Tibial artery (tissue), 4 donors: ENCODE measurements at regions of chr7 and their contacts with region 1.

Region 1: DNA sequence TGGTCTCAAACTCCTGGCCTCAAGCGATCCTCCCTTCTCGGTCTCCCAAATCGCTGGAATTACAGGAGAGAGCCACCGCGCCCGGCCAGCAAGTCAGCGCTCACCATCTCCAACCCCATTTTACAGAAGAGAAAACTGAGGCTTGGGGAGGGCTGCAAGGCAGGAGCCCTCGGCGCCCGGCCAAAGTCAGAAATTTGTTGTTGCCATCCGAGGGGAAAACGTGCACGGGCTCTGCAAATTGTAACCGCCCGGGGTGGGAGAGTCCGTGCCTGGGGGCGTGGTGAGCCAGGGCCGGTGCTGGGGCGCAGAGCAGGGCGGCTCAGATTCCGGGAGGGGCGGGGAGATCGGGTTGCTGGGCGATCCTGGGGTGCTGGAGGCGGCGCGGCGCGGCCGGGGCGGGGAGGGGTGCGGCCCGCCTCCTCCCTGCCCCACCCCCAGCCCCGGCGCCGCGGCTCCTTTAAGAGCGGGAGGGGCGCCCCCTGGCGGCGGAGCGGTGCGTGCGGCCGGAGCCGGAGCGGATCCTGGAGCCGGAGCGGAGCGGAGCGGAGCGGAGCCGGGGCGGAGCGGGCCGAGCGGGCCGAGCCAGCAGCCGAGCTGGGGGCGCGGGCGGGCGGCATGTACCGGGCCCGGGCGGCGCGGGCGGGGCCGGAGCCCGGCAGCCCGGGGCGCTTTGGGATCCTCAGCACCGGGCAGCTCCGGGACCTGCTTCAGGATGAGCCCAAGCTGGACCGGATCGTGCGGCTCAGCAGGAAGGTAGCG is at the start of gene VPS37D:
- DNase-seq: peak; percentile 82 to 90
- H3K4me3 ChIP-seq: peak within 1 kb of the TSS; percentile 53 to 54
- H3K27ac ChIP-seq: no peak within 1 kb of the TSS
- H3K4me1 ChIP-seq: peaks cover 0 to 19% (median 13%) of the 10 kb centered on the region in 4 donors
- H3K27me3 ChIP-seq: peaks cover 0 to 22% of the 10 kb centered on the region in 2 donors
- CTCF ChIP-seq: peak; percentile 65 to 97

Region 2: DNA sequence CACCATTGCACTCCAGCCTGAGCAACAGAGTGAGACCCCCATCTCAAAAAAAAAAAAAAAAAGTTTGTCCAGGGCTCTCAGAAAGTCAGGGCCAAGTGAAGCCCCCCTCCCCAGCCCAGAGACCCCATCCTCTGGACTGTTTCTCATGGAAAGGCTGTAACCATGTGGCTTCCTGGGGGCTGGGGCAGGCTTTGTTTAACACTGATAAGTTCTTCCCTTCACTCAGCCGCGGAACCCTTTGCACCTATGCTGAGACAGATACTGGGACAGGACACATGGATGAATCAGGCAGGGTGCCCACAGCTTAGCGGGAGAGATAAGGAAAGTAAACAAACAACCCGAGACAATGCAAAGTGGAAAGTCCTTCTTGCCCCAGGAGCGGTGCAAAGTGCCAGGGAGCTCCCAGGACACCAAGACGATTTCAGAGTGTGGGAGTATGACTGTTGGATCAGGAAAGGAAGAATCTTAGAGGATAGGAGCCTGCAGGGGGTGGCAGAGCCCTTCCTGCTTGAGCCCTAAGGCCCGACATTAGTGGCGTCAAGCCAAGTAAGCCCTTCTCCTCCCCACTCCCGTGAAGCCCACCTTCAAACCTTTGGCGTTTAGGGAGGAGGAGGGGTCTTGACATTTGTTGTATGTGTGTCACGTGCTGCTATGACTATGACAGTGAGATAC is 54.8 kb before region 1 on chr7:
- intact Hi-C with region 1: loop called (anchors 5 kb)
- DNase-seq: no peak
- H3K4me3 ChIP-seq: no peak overlapping the region
- H3K27ac ChIP-seq: no peak overlapping the region
- H3K4me1 ChIP-seq: no peaks in the 10 kb centered on the region
- H3K27me3 ChIP-seq: peaks cover 0 to 51% of the 10 kb centered on the region in 2 donors
- CTCF ChIP-seq: no peak

Region 3: GRCh38 chr7:73738612-73739374 is 71.3 kb after region 1 on chr7 and contains the start of gene ABHD11:
- intact Hi-C with region 1: loop called (anchors 5 kb)
- DNase-seq: peak; percentile 96 to 99
- H3K4me3 ChIP-seq: peak within 1 kb of the TSS; percentile 74 to 93
- H3K27ac ChIP-seq: peak within 1 kb of the TSS; percentile 83 to 89
- H3K4me1 ChIP-seq: peaks cover 0 to 38% (median 30%) of the 10 kb centered on the region in 4 donors
- H3K27me3 ChIP-seq: no peaks in the 10 kb centered on the region
- CTCF ChIP-seq: no peak